ENCODE measurements at regions of chr5 and their contacts with region 1.

Region 1: GRCh38 chr5:77491783-77492652 is at the start of gene WDR41:
- DNase-seq: peak; percentile 78 to 92
- ATAC-seq: peak; percentile 98
- H3K4me3 ChIP-seq: peak within 1 kb of the TSS; percentile 61
- H3K27ac ChIP-seq: peak within 1 kb of the TSS; percentile 83 to 97
- H3K4me1 ChIP-seq: peaks cover 13% of the 10 kb centered on the region; the same call in 2 of the 3 replicates
- CTCF ChIP-seq: peak; percentile 89
- EP300 ChIP-seq: no peak
- POLR2A ChIP-seq: peak; percentile 56
- RAD21 ChIP-seq: peak; percentile 58 to 79
- polyA plus RNA-seq, gene WDR41: 88.5 and 89.5 TPM in 2 replicates

Region 2: DNA sequence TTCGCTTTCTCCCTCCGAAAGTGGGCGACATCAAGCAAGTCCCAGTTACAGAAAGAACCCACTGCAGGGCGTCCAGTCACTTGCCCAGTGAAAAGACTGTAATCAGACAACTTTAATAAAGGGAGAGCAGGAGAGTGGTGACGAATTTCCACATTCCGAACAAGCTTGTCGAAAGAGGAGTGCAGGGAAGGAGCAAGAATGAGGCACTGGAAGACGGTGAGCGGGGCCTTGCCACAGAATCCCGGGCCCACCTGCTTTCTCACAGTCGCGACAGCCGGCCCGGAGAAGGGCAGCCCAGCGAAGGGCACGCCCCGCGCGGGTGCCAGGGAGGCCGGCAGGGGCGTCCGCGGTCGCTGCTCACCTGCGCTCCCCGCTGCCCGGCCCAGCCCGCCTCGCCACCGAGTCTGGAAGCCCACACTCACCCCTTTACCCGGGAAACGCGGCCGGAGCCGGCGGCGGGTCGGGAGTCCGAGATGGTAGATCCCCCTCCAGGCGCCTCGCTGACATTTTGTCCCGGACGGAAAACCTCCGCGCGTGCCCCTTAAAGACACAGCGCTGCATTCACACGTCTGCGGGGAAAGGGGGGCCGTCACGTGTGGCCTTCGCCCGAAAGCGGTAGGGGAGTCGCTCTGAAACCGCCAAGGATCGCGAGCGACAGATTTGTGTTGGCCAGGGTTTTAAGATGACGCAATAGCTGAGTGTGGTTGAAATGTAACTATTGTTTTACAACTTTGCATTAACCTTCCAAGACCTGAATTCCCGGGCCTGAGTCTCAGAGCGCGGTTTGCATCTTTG is 405.1 kb before region 1 on chr5 and contains the start of gene ZBED3:
- CTCF ChIA-PET with region 1: interaction called, 11 read pairs
- POLR2A ChIA-PET with region 1: interaction called, 10 read pairs
- DNase-seq: peak; percentile 79 to 89
- ATAC-seq: peak; percentile 94 to 95
- H3K4me3 ChIP-seq: peak within 1 kb of the TSS; percentile 54
- H3K27ac ChIP-seq: peak within 1 kb of the TSS; percentile 83 to 97
- H3K4me1 ChIP-seq: peaks cover 18% of the 10 kb centered on the region
- CTCF ChIP-seq: peak; percentile 44; the same call in 2 of the 3 replicates
- EP300 ChIP-seq: no peak
- POLR2A ChIP-seq: no peak
- RAD21 ChIP-seq: peak; percentile 25 to 50; a peak in 3 of 5 replicates
- polyA plus RNA-seq, gene ZBED3: 9.9 and 10.5 TPM in 2 replicates

Region 3: GRCh38 chr5:77129391-77129990 is 362.5 kb before region 1 on chr5:
- CTCF ChIA-PET with region 1: interaction called, 23 read pairs
- POLR2A ChIA-PET with region 1: interaction called, 3 read pairs
- DNase-seq: peak; percentile 19 to 47
- ATAC-seq: peak; percentile 67 to 79; a peak in 5 of 6 replicates
- H3K4me3 ChIP-seq: no peak overlapping the region
- H3K27ac ChIP-seq: no peak overlapping the region
- H3K4me1 ChIP-seq: peaks cover 15% of the 10 kb centered on the region
- CTCF ChIP-seq: peak; percentile 49
- EP300 ChIP-seq: no peak
- POLR2A ChIP-seq: no peak
- RAD21 ChIP-seq: peak; percentile 61 to 62

Region 4: GRCh38 chr5:77139001-77139400 is 353.0 kb before region 1 on chr5:
- CTCF ChIA-PET with region 1: interaction called, 11 read pairs
- POLR2A ChIA-PET with region 1: interaction called, 4 read pairs
- DNase-seq: no peak
- ATAC-seq: no peak
- H3K4me3 ChIP-seq: no peak overlapping the region
- H3K27ac ChIP-seq: no peak overlapping the region; a peak in 1 of 6 replicates
- H3K4me1 ChIP-seq: peaks cover 3% of the 10 kb centered on the region
- CTCF ChIP-seq: no peak
- EP300 ChIP-seq: no peak
- POLR2A ChIP-seq: no peak
- RAD21 ChIP-seq: no peak

Region 5: DNA sequence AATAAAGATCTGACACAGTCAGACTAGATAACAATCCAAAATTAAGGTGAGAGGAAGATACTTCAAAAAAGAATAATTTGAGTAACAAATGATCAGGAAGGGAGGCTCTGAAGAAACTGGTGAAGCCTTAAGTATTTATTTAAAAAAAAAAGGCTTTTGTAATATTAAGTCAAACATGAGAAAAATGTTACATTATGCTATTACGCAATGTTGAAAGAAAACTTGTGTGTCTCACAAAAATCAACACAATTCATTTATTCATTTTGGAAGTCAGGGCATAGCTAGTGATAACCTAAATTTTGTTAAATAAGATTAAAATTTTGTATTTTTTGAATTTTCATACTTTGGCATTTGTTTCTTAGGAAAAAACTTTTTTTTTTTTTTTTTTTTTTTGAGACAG is 28.1 kb before region 1 on chr5:
- CTCF ChIA-PET with region 1: interaction called, 10 read pairs
- POLR2A ChIA-PET with region 1: no interaction called
- DNase-seq: no peak
- ATAC-seq: no peak
- H3K4me3 ChIP-seq: no peak overlapping the region
- H3K27ac ChIP-seq: no peak overlapping the region
- H3K4me1 ChIP-seq: peaks cover 6% of the 10 kb centered on the region; the same call in 1 of the 3 replicates
- CTCF ChIP-seq: no peak
- EP300 ChIP-seq: no peak
- POLR2A ChIP-seq: no peak
- RAD21 ChIP-seq: no peak